Gastrocnemius medialis (tissue), 4 donors: ENCODE measurements at regions of chr21 and their contacts with region 1.

Region 1: GRCh38 chr21:19810779-19811178 is 1187.4 kb upstream of the NCAM2 start:
- DNase-seq: no peak
- ATAC-seq: no peak
- H3K4me3 ChIP-seq: no peak overlapping the region
- H3K27ac ChIP-seq: no peak overlapping the region
- H3K4me1 ChIP-seq: no peaks in the 10 kb centered on the region
- H3K27me3 ChIP-seq: no peaks in the 10 kb centered on the region
- CTCF ChIP-seq: no peak
- POLR2A ChIP-seq: no peak

Region 2: GRCh38 chr21:19461481-19462205 is 349.1 kb before region 1 on chr21:
- in situ Hi-C with region 1: no loop called
- intact Hi-C with region 1: no loop called
- DNase-seq: no peak
- ATAC-seq: no peak
- H3K4me3 ChIP-seq: no peak overlapping the region
- H3K27ac ChIP-seq: no peak overlapping the region
- H3K4me1 ChIP-seq: no peaks in the 10 kb centered on the region
- H3K27me3 ChIP-seq: no peaks in the 10 kb centered on the region
- CTCF ChIP-seq: no peak
- POLR2A ChIP-seq: no peak

Region 3: DNA sequence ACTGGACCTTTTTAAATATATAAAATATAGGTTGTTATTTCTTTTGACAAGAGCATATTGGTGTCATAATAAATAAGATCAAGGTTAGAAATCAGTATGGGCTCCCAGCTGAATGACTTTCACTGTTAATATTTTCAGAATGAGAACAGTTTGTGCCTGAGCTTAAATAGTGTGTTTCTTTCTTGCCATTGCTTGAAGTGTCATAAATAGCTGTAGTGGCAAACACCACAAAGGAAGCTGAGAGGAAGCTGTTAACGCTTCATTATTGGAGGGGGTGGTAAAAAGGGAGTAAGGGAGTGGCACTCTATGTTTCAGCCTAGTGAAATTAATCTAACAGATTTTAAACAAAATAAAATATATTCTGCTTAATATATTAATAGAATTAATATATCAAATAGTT is 97.6 kb after region 1 on chr21:
- in situ Hi-C with region 1: loop called in 1 of 4 experiments (anchors 25 kb)
- intact Hi-C with region 1: no loop called
- DNase-seq: no peak
- ATAC-seq: no peak
- H3K4me3 ChIP-seq: no peak overlapping the region
- H3K27ac ChIP-seq: no peak overlapping the region
- H3K4me1 ChIP-seq: no peaks in the 10 kb centered on the region
- H3K27me3 ChIP-seq: no peaks in the 10 kb centered on the region
- CTCF ChIP-seq: no peak
- POLR2A ChIP-seq: no peak